ENCODE measurements at regions of chr3 and their contacts with region 1.

Region 1: GRCh38 chr3:63497641-63498040 is 154.8 kb upstream of the SNTN start:
- DNase-seq: no peak
- ATAC-seq: no peak
- H3K4me3 ChIP-seq: no peak overlapping the region
- H3K27ac ChIP-seq: no peak overlapping the region
- H3K4me1 ChIP-seq: no peaks in the 10 kb centered on the region
- H3K27me3 ChIP-seq: no peaks in the 10 kb centered on the region

Region 2: DNA sequence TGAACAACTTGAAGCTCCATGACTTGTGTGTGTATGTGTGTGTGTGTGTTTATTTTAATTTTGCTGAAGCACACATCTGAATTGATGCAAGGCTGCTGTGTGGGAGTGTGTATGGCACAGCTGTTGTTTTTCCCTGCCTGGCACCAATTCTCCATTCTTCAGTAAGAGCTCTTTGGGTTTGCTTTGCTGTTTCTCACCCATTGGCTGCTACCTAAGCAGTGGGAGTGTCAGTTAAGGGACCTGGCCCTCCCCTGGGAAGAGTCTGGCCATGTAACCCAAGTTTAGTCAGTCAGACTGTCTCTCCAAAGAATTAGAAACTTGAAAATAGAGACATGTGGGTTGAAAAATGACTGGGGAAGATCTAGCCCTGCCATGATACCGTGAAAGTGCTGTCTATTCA is 345.7 kb before region 1 on chr3:
- intact Hi-C with region 1: no loop called
- DNase-seq: no peak
- ATAC-seq: no peak
- H3K4me3 ChIP-seq: no peak overlapping the region
- H3K27ac ChIP-seq: no peak overlapping the region
- H3K4me1 ChIP-seq: no peaks in the 10 kb centered on the region
- H3K27me3 ChIP-seq: no peaks in the 10 kb centered on the region

Region 3: GRCh38 chr3:63309780-63310179 is 187.9 kb before region 1 on chr3:
- intact Hi-C with region 1: loop called in 1 of 2 experiments (anchors 5 kb)
- DNase-seq: no peak
- ATAC-seq: no peak
- H3K4me3 ChIP-seq: no peak overlapping the region
- H3K27ac ChIP-seq: no peak overlapping the region
- H3K4me1 ChIP-seq: no peaks in the 10 kb centered on the region
- H3K27me3 ChIP-seq: no peaks in the 10 kb centered on the region